ENCODE measurements at regions of chr20 and their contacts with region 1.

Region 1: GRCh38 chr20:39019805-39020325 is 57.7 kb downstream of the DHX35 start:
- DNase-seq: no peak

Region 2: GRCh38 chr20:39004508-39004907 is 15.4 kb before region 1 on chr20:
- intact Hi-C with region 1: loop called (anchors 2 kb)
- DNase-seq: no peak

Region 3: DNA sequence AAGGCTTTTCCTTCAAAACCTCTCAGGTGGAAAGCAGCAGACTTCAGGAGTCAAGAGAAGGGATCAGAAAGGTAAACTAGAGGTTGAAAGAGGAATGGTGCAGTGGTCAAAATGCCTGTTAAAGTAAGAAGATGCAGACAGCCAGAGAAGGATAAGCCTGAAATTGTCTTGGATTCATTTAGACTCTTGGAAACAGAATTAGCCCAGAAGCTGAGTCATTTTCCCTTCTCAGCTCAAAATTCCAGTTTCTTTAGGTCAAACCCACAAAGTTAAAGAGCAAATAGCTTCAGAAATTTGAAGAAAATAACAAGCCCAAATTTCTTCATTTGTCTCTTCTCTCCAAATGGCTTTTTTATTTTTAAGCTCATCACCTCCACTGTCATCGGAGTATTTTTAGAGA is 16.1 kb after region 1 on chr20:
- intact Hi-C with region 1: no loop called
- DNase-seq: no peak

Measured in cardiac septum (tissue), 1 donor.